ENCODE measurements at regions of chr12 and their contacts with region 1.

Region 1: DNA sequence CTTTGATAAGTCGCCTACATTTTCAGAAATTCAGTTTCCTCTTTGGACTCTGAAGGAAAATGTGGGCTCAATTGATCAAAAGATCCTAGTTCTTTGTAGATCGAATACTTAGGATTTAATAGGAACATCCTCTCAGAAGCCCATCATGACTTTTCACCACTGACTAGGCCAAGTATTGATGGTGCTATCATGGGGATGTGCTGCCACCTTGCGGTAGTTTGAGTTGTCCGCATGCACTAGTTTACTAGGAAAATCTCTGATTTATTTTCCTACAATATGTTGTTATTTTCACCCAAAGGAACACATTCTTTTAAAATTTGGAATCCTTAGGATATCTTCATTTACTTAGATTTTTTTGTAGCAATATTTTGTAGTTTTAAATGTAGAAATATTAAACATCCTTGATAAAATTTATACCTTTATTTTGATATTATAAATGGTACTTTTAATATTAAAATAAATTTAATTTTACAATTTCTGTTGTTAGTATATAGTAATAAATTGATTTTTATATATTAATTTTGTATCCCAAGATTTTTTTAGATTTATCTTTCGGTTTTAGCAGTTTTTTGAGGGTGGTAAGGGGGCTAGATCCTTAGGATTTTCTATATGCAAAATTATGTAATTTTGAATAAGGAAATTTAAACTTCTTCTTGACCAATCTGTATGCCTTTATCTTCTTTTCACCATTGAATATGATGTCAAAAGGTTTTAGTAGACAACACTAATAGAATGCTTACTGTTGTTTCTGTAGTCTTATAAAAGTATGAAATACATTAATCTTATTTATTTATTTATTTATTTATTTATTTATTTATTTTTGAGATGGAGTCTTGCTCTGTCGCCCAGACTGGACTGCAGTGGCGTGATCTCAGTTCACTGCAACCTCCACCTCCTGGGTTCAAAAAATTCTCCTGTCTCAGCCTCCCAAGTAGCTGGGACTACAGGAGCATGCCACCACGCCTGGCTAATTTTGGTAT is 52.9 kb upstream of the OR9K2 start:
- DNase-seq: peak; percentile 81
- ATAC-seq: peak; percentile 62; the same call in 1 of the 2 replicates
- H3K4me3 ChIP-seq: no peak overlapping the region
- H3K27ac ChIP-seq: no peak overlapping the region
- H3K4me1 ChIP-seq: no peaks in the 10 kb centered on the region
- H3K27me3 ChIP-seq: peaks cover 28% of the 10 kb centered on the region
- CTCF ChIP-seq: peak; percentile 89

Region 2: GRCh38 chr12:54701940-54702592 is 371.3 kb before region 1 on chr12:
- CTCF ChIA-PET with region 1: interaction called, 4 read pairs
- POLR2A ChIA-PET with region 1: no interaction called
- intact Hi-C with region 1: loop called (anchors 1 kb)
- DNase-seq: peak; percentile 61
- ATAC-seq: peak; percentile 75
- H3K4me3 ChIP-seq: no peak overlapping the region
- H3K27ac ChIP-seq: no peak overlapping the region
- H3K4me1 ChIP-seq: no peaks in the 10 kb centered on the region
- H3K27me3 ChIP-seq: peaks cover 65% of the 10 kb centered on the region
- CTCF ChIP-seq: peak; percentile 70

Region 3: DNA sequence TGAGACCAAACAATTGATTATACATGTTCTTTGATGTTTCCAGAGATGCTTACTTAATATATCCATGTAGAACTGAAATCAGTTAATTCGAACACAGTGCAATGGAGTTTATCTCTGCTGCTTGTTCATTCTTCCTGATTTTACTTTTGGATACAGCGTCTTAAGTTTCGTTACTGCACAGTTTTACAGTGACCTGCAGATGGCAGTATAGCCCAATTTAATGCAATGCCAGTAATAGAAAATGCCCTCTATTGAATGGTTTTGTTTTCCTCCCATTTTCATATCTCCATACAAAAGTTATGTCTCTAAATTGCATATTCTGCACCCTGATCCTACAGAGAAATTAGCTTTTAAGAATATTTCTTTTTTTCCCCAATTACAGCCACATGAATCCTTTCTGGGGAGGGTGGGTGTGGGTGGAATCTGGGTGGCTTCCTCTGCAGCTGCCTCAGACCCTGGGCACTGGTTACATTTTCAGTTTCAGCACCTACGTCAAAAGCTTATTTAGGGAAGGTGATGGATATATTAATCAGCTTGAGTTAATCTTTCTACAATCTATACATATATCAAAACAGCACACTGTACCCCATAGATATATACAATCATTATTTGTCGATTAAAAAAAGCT is 324.0 kb before region 1 on chr12:
- CTCF ChIA-PET with region 1: no interaction called
- POLR2A ChIA-PET with region 1: no interaction called
- intact Hi-C with region 1: loop called (anchors 1 kb)
- DNase-seq: peak; percentile 65
- ATAC-seq: peak; percentile 73
- H3K4me3 ChIP-seq: no peak overlapping the region
- H3K27ac ChIP-seq: no peak overlapping the region
- H3K4me1 ChIP-seq: no peaks in the 10 kb centered on the region
- H3K27me3 ChIP-seq: peaks cover 12% of the 10 kb centered on the region; the same call in 1 of the 2 replicates
- CTCF ChIP-seq: peak; percentile 88

Region 4: GRCh38 chr12:54935235-54935951 is 137.9 kb before region 1 on chr12:
- CTCF ChIA-PET with region 1: no interaction called
- POLR2A ChIA-PET with region 1: no interaction called
- intact Hi-C with region 1: no loop called
- DNase-seq: peak; percentile 94
- ATAC-seq: peak; percentile 76
- H3K4me3 ChIP-seq: no peak overlapping the region
- H3K27ac ChIP-seq: peak overlapping the region; percentile 96
- H3K4me1 ChIP-seq: peaks cover 59% of the 10 kb centered on the region
- H3K27me3 ChIP-seq: no peaks in the 10 kb centered on the region
- CTCF ChIP-seq: peak; percentile 35; the same call in 1 of the 2 replicates

Region 5: DNA sequence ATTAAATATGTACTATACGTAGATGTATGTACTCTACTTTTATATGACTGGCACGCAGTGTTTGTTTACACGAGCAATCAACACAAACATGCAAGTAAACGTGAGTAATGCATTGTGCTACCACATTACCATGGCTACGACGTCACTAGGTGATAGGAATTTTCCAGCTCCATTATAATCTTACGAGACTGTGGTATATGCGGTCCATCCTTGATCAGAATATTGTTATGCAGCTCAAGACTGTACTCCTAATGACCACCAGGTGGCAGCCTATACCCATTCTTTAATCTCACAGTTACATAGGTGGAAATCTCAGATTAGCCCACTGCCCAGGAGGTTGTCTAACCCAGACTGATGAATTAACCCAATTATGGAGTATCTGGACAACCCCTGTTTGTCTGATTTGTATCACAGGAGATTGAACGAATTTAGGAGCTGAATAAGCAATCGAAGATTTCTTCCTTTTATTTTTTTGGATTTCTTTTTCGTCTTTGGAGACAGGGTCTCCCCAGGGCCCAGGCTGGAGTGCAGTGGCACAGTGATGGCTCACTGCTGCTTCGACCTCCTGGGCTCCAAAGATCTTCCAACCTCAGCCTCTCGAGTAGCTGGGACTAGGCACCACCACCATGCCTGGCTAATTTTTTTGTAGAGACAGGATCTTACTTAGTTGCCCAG is 80.0 kb before region 1 on chr12:
- CTCF ChIA-PET with region 1: interaction called, 24 read pairs
- POLR2A ChIA-PET with region 1: no interaction called
- intact Hi-C with region 1: loop called (anchors 1 kb)
- DNase-seq: peak; percentile 81
- ATAC-seq: peak; percentile 95
- H3K4me3 ChIP-seq: no peak overlapping the region
- H3K27ac ChIP-seq: no peak overlapping the region
- H3K4me1 ChIP-seq: no peaks in the 10 kb centered on the region
- H3K27me3 ChIP-seq: peaks cover 66% of the 10 kb centered on the region
- CTCF ChIP-seq: peak; percentile 89